ENCODE measurements at regions of chr17 and their contacts with region 1.

Region 1: DNA sequence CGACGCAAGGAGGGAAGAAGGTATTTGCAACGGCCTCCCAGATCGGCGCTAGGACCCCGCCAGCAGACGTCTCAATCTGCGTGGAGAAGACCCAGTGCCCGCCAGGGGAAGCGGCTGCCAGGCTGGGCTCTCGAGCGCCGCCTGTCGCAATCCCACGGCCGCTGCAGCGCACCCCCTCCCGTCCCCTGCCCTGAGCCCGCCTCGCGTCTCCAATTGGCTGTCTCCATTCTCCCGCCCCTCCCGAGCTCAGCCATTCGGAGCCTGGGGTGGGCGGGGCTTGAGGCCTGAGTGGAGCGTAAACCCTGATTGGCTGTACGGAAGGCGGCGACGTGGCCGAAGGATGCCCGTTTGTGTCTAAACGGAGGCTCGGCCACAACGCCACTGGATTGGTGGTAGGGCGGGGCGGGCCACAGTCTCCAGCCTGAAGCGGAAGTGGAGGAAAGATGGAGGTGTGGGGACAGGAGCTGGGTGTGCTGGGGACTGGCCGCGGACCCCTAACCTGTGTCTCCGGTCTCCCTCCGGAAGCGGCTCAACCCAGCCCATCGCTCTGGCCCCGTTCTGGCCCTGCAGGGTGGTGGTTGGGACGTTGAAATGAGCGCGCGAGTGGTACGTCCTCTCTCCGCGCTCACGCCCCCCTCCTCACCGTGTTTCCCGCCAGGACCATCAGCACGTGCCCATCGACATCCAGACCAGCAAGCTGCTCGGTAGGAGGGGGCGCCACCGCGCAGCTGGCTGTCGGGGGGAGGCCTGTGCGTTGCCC is at the start of gene CDK5RAP3:
- DNase-seq: peak; percentile 100
- H3K4me3 Mint-ChIP-seq: peak within 1 kb of the TSS; percentile 88
- H3K27ac Mint-ChIP-seq: peak within 1 kb of the TSS; percentile 85
- H3K4me1 Mint-ChIP-seq: peaks cover 22% of the 10 kb centered on the region
- H3K27me3 Mint-ChIP-seq: no peaks in the 10 kb centered on the region
- total RNA-seq, gene CDK5RAP3: 170 to 183 TPM

Region 2: DNA sequence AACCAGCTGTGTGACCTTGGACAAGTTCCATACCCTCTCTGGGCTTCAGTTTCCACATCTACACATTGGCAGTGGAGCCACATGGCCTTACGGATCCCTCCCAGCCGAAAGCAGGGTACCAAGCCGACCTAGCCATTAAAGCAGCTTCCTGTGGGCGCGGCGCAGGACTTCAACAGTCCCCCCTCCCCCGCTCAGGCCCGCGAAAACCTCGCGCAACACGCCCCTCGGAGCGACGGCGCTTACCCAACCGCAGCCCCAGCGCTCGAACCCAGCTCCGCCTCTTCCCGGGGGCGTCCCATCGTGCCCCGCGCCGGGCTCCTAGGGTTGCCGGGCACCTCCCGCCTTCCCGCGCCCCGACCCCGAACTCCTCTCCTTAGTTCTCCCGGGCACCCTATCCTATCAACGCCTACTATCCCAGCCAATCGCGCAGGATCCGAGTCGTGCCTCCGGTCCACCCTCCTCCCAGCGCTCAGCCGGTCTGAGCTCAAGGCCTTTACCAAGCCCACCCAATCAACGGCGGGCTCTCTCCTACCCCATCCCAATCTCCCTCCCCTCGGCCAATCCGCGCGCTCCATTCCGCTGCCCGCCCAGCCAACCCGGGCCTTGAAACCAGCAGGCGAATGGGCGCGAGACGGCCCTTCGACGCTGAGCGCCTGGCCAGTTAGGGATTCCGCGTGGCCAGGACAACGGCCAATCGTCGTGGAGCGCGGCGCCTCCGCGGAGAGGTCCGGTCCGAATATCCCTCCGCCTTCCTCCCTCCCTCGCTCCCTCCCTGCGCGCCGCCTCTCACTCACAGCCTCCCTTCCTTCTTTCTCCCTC is 321.5 kb before region 1 on chr17 and contains the start of gene KPNB1:
- CTCF ChIA-PET with region 1: no interaction called
- POLR2A ChIA-PET with region 1: no interaction called
- intact Hi-C with region 1: loop called (anchors 1 kb)
- DNase-seq: peak; percentile 100
- H3K4me3 Mint-ChIP-seq: peak within 1 kb of the TSS; percentile 92
- H3K27ac Mint-ChIP-seq: peak within 1 kb of the TSS; percentile 98
- H3K4me1 Mint-ChIP-seq: peaks cover 44% of the 10 kb centered on the region
- H3K27me3 Mint-ChIP-seq: no peaks in the 10 kb centered on the region
- total RNA-seq, gene KPNB1: 475 to 488 TPM

Region 3: GRCh38 chr17:47840740-47841603 is 129.9 kb before region 1 on chr17 and contains the start of gene SCRN2:
- CTCF ChIA-PET with region 1: interaction called, 27 read pairs
- POLR2A ChIA-PET with region 1: no interaction called
- intact Hi-C with region 1: loop called (anchors 2 kb)
- DNase-seq: peak; percentile 95
- H3K4me3 Mint-ChIP-seq: peak within 1 kb of the TSS; percentile 91
- H3K27ac Mint-ChIP-seq: peak within 1 kb of the TSS; percentile 70
- H3K4me1 Mint-ChIP-seq: peaks cover 30% of the 10 kb centered on the region
- H3K27me3 Mint-ChIP-seq: peaks cover 15% of the 10 kb centered on the region
- total RNA-seq, gene SCRN2: 20.6 to 21.0 TPM

Region 4: GRCh38 chr17:47853616-47854015 is 117.3 kb before region 1 on chr17:
- CTCF ChIA-PET with region 1: no interaction called
- POLR2A ChIA-PET with region 1: no interaction called
- intact Hi-C with region 1: no loop called
- DNase-seq: no peak
- H3K4me3 Mint-ChIP-seq: no peak overlapping the region
- H3K27ac Mint-ChIP-seq: no peak overlapping the region
- H3K4me1 Mint-ChIP-seq: peaks cover 16% of the 10 kb centered on the region
- H3K27me3 Mint-ChIP-seq: peaks cover 53% of the 10 kb centered on the region

Region 5: GRCh38 chr17:47941236-47941994 is 29.5 kb before region 1 on chr17 and contains the start of gene PNPO:
- CTCF ChIA-PET with region 1: interaction called, 290 read pairs
- POLR2A ChIA-PET with region 1: interaction called, 4 read pairs
- intact Hi-C with region 1: loop called (anchors 2 kb)
- DNase-seq: peak; percentile 98
- H3K4me3 Mint-ChIP-seq: peak within 1 kb of the TSS; percentile 95
- H3K27ac Mint-ChIP-seq: peak within 1 kb of the TSS; percentile 81
- H3K4me1 Mint-ChIP-seq: peaks cover 52% of the 10 kb centered on the region
- H3K27me3 Mint-ChIP-seq: no peaks in the 10 kb centered on the region
- total RNA-seq, gene PNPO: 32.5 to 34.4 TPM

Region 6: GRCh38 chr17:47957591-47958428 is 13.1 kb before region 1 on chr17 and contains the start of gene PRR15L:
- CTCF ChIA-PET with region 1: interaction called, 290 read pairs
- POLR2A ChIA-PET with region 1: interaction called, 3 read pairs
- intact Hi-C with region 1: no loop called
- DNase-seq: no peak
- H3K4me3 Mint-ChIP-seq: no peak within 1 kb of the TSS
- H3K27ac Mint-ChIP-seq: no peak within 1 kb of the TSS
- H3K4me1 Mint-ChIP-seq: no peaks in the 10 kb centered on the region
- H3K27me3 Mint-ChIP-seq: no peaks in the 10 kb centered on the region
- total RNA-seq, gene PRR15L: not detected

Region 7: GRCh38 chr17:47992216-47992615 is 21.3 kb after region 1 on chr17:
- CTCF ChIA-PET with region 1: no interaction called
- POLR2A ChIA-PET with region 1: no interaction called
- intact Hi-C with region 1: no loop called
- DNase-seq: no peak
- H3K4me3 Mint-ChIP-seq: no peak overlapping the region
- H3K27ac Mint-ChIP-seq: no peak overlapping the region
- H3K4me1 Mint-ChIP-seq: peaks cover 2% of the 10 kb centered on the region
- H3K27me3 Mint-ChIP-seq: peaks cover 3% of the 10 kb centered on the region